Activated CD4-positive, alpha-beta memory T cell treated with anti-CD3 and anti-CD28 coated beads for 36 hours (primary cell): ENCODE measurements at regions of chr10 and their contacts with region 1.

Region 1: DNA sequence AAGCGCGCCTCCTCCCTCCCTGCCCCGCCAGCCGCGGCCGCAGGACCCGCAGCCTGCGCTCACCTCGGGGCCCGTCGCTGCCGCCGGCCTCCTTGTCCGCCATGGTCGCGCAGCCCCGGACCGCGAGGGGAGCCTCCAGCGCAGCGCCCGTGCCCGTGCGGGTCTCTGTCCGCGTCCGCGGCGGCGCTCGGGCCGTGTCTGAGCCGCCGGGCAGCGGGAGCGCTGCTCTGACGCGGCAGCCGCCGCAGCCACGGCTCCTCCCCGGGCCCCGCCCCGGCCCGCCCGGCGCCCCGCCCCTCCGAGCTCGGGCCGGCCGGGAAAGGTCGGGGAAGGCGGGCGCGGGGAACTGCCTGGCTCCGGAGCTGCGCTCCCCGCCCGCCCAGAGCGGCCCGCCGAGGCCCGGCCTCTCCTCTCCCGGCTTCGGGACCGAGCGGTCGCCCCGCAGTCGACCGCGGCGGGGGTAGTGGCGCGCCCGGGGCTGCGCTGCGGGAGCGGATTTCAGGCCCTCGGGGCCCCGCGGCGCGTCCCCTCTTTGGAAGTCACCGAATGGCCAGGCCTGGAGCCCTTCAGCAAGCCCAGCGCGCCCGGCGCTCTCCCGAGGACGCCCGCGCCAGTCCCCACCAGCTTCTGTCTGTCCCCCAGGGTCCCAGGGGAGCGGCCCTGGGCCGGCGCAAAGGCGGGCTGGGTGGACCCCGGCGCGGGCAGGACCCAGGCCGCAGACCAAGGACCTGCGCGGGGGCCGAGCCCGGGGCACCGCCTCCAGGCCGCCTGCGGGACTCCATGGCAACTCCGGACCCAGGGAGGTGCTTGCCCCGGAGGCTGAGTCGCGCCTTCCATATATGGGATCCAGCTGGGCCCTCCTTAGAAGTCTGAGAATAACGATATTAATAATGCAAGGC is at the start of gene HSPA12A:
- DNase-seq: peak; percentile 59
- H3K4me3 Mint-ChIP-seq: no peak within 1 kb of the TSS
- H3K27ac Mint-ChIP-seq: no peak within 1 kb of the TSS
- H3K4me1 Mint-ChIP-seq: no peaks in the 10 kb centered on the region
- H3K27me3 Mint-ChIP-seq: peaks cover 61% of the 10 kb centered on the region
- total RNA-seq, gene HSPA12A: 0.40 to 0.41 TPM

Region 2: GRCh38 chr10:116470768-116471415 is 271.7 kb before region 1 on chr10:
- CTCF ChIA-PET with region 1: no interaction called
- POLR2A ChIA-PET with region 1: no interaction called
- intact Hi-C with region 1: no loop called
- DNase-seq: no peak
- H3K4me3 Mint-ChIP-seq: no peak overlapping the region
- H3K27ac Mint-ChIP-seq: no peak overlapping the region
- H3K4me1 Mint-ChIP-seq: no peaks in the 10 kb centered on the region
- H3K27me3 Mint-ChIP-seq: peaks cover 5% of the 10 kb centered on the region

Region 3: GRCh38 chr10:116721547-116722392 is 20.8 kb before region 1 on chr10:
- CTCF ChIA-PET with region 1: interaction called, 3 read pairs
- POLR2A ChIA-PET with region 1: no interaction called
- intact Hi-C with region 1: loop called (anchors 1 kb)
- DNase-seq: peak; percentile 3
- H3K4me3 Mint-ChIP-seq: no peak overlapping the region
- H3K27ac Mint-ChIP-seq: no peak overlapping the region
- H3K4me1 Mint-ChIP-seq: peaks cover 30% of the 10 kb centered on the region
- H3K27me3 Mint-ChIP-seq: peaks cover 61% of the 10 kb centered on the region

Region 4: GRCh38 chr10:116787893-116788665 is 45.5 kb after region 1 on chr10:
- CTCF ChIA-PET with region 1: interaction called, 3 read pairs
- POLR2A ChIA-PET with region 1: no interaction called
- intact Hi-C with region 1: loop called (anchors 2 kb)
- DNase-seq: peak; percentile 84
- H3K4me3 Mint-ChIP-seq: peak overlapping the region; percentile 16
- H3K27ac Mint-ChIP-seq: no peak overlapping the region
- H3K4me1 Mint-ChIP-seq: peaks cover 18% of the 10 kb centered on the region
- H3K27me3 Mint-ChIP-seq: peaks cover 25% of the 10 kb centered on the region